ENCODE measurements at regions of chr5 and their contacts with region 1.

Region 1: DNA sequence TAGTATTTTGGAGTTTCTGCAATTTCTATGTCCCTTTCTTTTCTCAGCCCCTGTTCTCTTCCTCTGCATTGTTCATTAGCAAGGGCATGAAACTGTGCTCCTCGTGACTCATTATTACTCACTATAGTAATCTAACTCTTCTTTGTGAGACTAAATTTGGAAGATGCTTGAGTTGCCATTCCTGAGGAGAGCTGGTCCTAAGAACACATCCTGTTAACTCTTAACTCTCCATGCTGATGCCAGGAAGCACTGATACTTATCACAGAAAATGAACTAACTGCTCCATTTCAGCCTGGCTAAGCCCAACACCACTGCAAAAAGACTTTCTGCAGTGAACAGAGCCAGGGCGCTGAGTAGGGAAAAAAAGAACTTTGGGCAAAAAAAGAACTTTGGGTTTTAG is 10.6 kb upstream of the CSNK1A1 start:
- DNase-seq: no peak
- ATAC-seq: no peak
- H3K4me3 Mint-ChIP-seq: no peak overlapping the region
- H3K27ac Mint-ChIP-seq: no peak overlapping the region
- H3K4me1 Mint-ChIP-seq: peaks cover 11% of the 10 kb centered on the region
- H3K27me3 Mint-ChIP-seq: no peaks in the 10 kb centered on the region

Region 2: GRCh38 chr5:149381987-149382340 is 179.9 kb before region 1 on chr5:
- CTCF ChIA-PET with region 1: interaction called, 20 read pairs
- POLR2A ChIA-PET with region 1: no interaction called
- DNase-seq: peak; percentile 78
- ATAC-seq: peak; percentile 85
- H3K4me3 Mint-ChIP-seq: no peak overlapping the region
- H3K27ac Mint-ChIP-seq: no peak overlapping the region
- H3K4me1 Mint-ChIP-seq: no peaks in the 10 kb centered on the region
- H3K27me3 Mint-ChIP-seq: peaks cover 2% of the 10 kb centered on the region

Region 3: GRCh38 chr5:149576021-149576420 is 14.2 kb after region 1 on chr5:
- CTCF ChIA-PET with region 1: interaction called, 17 read pairs
- POLR2A ChIA-PET with region 1: no interaction called
- DNase-seq: no peak
- ATAC-seq: peak; percentile 76
- H3K4me3 Mint-ChIP-seq: no peak overlapping the region
- H3K27ac Mint-ChIP-seq: peak overlapping the region; percentile 74
- H3K4me1 Mint-ChIP-seq: peaks cover 15% of the 10 kb centered on the region
- H3K27me3 Mint-ChIP-seq: peaks cover 8% of the 10 kb centered on the region

Region 4: DNA sequence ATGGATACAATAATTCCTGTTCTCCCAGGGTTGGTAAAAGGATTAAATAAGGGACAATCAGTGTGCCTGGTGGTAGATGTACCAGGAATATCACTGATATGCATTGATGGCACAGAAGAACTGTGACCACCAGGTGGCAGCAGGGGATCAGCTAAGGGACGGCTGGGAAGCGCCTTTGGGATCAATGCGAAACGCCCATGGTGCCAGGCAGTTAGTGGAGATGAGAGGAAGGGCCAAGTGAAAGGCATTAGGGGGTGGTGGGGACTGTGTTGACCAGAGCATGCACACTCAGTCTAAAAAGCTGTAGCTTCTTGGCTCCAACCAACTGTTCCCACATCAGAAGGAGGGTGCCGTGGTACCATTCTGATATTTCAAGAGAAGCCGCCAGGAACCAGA is 75.0 kb after region 1 on chr5:
- CTCF ChIA-PET with region 1: no interaction called
- POLR2A ChIA-PET with region 1: no interaction called
- DNase-seq: peak; percentile 65
- ATAC-seq: peak; percentile 72
- H3K4me3 Mint-ChIP-seq: no peak overlapping the region
- H3K27ac Mint-ChIP-seq: no peak overlapping the region
- H3K4me1 Mint-ChIP-seq: peaks cover 7% of the 10 kb centered on the region
- H3K27me3 Mint-ChIP-seq: no peaks in the 10 kb centered on the region

Region 5: DNA sequence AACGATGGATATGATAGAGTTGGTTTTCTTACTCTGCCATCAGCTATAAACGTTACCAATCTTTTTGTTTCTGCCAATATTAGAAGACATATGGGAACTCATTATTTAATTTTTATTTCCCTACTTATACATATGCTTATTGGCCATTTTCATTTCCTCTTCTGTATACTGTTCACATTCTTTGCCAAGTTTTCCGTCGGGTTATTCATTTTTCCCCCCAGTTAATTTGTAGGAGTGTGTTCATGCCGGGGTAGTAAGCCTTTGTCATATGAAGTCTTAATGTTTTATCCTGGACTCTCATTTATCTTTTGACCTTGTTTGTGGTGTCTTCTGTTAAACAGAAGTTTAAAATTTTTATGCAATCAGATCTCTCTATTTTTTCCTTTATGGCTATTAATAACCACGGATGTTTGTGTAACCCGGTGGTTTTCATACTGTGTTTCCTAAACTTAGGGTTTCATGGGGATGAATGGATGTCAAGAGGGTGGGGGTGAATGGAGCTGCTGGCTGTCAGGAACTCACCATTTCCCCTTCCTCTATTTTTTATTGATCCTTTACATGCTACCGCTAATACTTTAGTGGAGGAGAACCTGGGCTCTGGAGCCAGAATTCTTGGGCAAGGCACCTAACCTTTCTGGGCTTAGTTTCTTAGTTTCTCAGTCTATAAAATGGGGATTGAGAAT is 125.8 kb after region 1 on chr5:
- CTCF ChIA-PET with region 1: no interaction called
- POLR2A ChIA-PET with region 1: no interaction called
- DNase-seq: no peak
- ATAC-seq: no peak
- H3K4me3 Mint-ChIP-seq: no peak overlapping the region
- H3K27ac Mint-ChIP-seq: no peak overlapping the region
- H3K4me1 Mint-ChIP-seq: no peaks in the 10 kb centered on the region
- H3K27me3 Mint-ChIP-seq: peaks cover 31% of the 10 kb centered on the region

Region 6: DNA sequence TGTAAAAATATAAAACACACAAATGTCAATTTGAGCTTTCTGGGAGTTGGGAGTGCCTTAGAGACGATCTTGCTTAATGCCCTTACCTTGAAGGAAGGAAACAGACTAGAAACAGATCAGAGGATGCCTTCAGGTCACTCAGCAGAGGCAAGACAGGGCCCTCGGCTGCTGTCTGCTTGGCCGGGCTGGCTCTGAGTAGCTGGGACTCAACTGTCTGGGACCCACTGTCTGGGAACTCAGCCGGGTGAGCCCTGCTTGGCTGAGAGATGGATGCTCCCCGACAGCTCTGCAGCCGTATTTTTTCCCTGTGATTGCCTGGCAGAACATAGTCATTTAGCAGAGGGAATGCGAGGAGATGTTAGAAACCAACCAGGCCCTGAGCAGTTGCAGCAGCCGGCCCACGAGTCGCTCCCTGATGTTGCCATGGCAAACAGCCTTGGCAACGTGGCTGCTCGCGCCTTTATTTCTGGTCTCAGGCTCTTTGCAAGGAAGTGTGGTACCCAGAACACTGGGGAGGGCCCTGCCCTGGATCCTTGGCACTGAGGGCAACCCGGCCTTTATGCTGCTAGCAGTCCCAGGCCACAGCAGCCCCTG is 179.1 kb after region 1 on chr5:
- CTCF ChIA-PET with region 1: no interaction called
- POLR2A ChIA-PET with region 1: no interaction called
- DNase-seq: no peak
- ATAC-seq: no peak
- H3K4me3 Mint-ChIP-seq: no peak overlapping the region
- H3K27ac Mint-ChIP-seq: no peak overlapping the region
- H3K4me1 Mint-ChIP-seq: no peaks in the 10 kb centered on the region
- H3K27me3 Mint-ChIP-seq: no peaks in the 10 kb centered on the region

Measured in activated CD8-positive, alpha-beta T cell treated with anti-CD3 and anti-CD28 coated beads, Interleukin-2, amount 10 ng/mL, durations not matched to agents 7 days and 5 days (primary cell).